Activated CD4-positive, alpha-beta T cell treated with anti-CD3 and anti-CD28 coated beads for 36 hours (primary cell): ENCODE measurements at regions of chr14 and their contacts with region 1.

Region 1: DNA sequence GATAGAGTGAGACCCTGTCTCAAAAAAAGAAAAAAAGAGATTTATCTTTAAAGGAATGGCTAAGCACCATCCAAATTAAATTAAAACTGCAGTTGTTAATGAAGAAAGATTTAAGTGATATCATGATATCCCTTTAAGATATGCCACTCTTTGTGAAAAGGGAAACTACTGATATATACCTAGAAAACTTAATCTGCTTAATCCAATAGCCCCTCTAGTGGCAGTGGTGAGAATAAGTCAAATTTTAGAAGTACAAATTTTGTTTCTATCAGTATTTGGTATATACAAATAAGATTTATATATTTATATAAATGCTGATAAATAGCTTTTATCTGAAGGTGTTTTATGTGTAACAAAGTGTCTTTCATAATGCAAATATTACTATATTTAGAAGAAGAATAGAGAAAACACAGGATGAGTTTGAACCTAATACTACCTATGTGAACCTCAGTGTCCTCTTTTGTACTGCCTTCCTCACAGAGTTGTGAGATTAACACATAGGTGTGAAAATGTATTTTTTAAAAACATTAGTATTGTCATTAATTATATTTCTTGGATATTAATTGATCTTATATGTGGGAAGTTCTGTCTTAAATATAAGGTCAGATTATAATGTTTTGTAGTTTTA is 51.4 kb upstream of the GARIN2 start:
- DNase-seq: no peak
- ATAC-seq: no peak
- H3K4me3 Mint-ChIP-seq: no peak overlapping the region
- H3K27ac Mint-ChIP-seq: no peak overlapping the region
- H3K4me1 Mint-ChIP-seq: peaks cover 28% of the 10 kb centered on the region
- H3K27me3 Mint-ChIP-seq: no peaks in the 10 kb centered on the region

Region 2: DNA sequence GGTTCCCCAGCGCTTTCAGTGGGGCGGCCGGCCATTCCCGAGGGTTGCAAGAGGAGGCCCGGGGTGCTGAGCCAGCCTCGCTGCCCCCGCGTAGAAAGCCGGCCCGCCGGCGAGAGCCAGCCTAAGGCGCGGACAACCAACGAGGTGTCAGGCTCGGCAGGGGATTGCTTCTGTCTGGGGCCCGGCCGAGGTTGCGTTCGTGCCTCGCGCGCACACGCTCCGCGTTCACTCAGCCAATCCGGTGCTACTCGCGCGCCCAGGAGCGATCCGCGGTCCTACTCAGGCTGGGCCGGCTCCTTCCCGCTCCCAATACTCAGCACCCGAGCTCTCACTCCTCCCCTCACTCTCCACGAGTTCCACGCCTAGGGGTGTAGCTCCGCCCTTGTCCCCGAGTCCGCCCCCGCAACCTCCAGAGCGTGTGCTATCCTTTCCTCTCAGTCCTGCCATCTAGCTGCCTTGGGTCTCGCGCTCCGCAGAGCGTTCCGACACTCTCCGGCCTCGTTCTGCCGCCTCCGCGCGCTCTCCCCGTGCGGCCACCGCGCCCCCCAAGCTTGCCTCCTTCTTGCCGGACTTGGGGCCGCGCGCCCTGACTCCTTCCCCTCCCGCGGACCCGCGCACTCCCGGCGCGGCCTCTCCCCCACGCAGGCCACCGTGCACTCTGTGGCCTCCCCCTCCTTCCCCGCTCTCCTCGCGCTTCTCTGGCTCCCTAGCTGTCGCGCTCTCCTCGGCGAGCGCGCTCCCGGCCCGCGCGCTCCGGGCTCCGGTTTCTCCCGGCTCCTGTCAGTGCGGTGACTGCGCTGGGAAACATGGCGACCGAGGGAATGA is 629.9 kb before region 1 on chr14 and contains the start of gene GPHN:
- CTCF ChIA-PET with region 1: no interaction called
- POLR2A ChIA-PET with region 1: no interaction called
- intact Hi-C with region 1: loop called in 1 of 2 experiments (anchors 1 kb)
- DNase-seq: peak; percentile 96
- ATAC-seq: peak; percentile 96
- H3K4me3 Mint-ChIP-seq: peak within 1 kb of the TSS; percentile 90
- H3K27ac Mint-ChIP-seq: peak within 1 kb of the TSS; percentile 94
- H3K4me1 Mint-ChIP-seq: peaks cover 39% of the 10 kb centered on the region
- H3K27me3 Mint-ChIP-seq: peaks cover 3% of the 10 kb centered on the region
- total RNA-seq, gene GPHN: 29.8 to 37.5 TPM

Region 3: DNA sequence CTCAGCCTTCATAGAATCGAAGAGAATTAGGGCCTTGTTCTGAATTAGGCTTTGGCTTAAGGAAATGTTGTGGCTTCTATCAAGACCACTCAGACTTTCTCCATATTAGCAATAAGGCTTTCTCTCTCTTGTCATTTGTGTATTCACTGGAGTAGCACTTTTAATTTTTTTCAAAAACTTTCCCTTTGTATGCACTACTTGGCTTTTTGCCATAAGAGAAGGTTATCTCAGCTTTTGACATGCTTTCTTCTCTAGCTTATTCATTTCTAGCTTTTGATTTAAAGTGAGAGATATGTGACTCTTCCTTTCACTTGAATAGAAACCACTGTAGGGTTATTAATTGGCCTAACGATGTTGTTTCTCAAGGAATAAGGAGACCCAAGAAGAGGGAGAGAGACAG is 385.7 kb before region 1 on chr14:
- CTCF ChIA-PET with region 1: no interaction called
- POLR2A ChIA-PET with region 1: no interaction called
- intact Hi-C with region 1: loop called in 1 of 2 experiments (anchors 1 kb)
- DNase-seq: no peak
- ATAC-seq: peak; percentile 83
- H3K4me3 Mint-ChIP-seq: no peak overlapping the region
- H3K27ac Mint-ChIP-seq: no peak overlapping the region
- H3K4me1 Mint-ChIP-seq: peaks cover 13% of the 10 kb centered on the region
- H3K27me3 Mint-ChIP-seq: no peaks in the 10 kb centered on the region

Region 4: DNA sequence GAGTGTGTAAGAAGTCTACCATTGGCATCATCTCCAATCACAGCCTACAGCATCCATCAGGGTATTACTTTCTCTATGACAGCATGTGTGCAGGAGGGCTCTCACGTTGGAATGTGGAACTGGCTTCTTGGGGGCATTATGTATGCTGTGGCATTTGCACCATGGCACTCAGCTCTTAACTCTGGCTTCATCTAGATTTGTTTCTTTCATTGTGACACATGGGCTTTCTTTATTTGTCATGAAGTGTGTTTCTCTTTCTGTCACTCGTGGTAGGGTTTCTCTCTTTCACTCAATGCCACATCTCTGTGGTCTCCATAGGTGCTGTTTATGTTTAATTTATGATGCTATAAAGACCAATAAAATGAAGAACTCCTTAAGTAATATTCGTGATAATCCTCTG is 139.8 kb before region 1 on chr14:
- CTCF ChIA-PET with region 1: interaction called, 5 read pairs
- POLR2A ChIA-PET with region 1: no interaction called
- intact Hi-C with region 1: loop called (anchors 1 to 10 kb)
- DNase-seq: peak; percentile 37
- ATAC-seq: peak; percentile 98
- H3K4me3 Mint-ChIP-seq: no peak overlapping the region
- H3K27ac Mint-ChIP-seq: no peak overlapping the region
- H3K4me1 Mint-ChIP-seq: peaks cover 11% of the 10 kb centered on the region
- H3K27me3 Mint-ChIP-seq: no peaks in the 10 kb centered on the region

Region 5: DNA sequence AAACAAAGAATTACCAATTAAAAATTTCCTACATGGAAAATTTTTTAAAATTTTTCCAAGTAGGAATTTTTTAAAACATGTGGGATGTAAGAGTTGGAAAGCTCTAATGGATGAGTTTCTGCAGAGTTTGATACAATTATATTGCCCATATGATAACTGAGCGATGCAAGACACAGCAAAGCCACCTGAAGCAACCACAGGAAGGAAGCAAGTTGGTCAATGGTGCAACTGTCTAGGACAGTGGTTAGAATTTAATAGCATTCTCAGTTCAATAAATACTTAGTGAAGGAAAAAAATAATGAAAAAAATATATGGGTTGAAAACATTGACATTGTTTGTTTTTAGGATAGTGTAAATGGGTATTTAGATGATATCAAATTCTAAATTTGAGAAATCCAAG is 127.3 kb before region 1 on chr14:
- CTCF ChIA-PET with region 1: no interaction called
- POLR2A ChIA-PET with region 1: no interaction called
- intact Hi-C with region 1: no loop called
- DNase-seq: no peak
- ATAC-seq: no peak
- H3K4me3 Mint-ChIP-seq: no peak overlapping the region
- H3K27ac Mint-ChIP-seq: no peak overlapping the region
- H3K4me1 Mint-ChIP-seq: no peaks in the 10 kb centered on the region
- H3K27me3 Mint-ChIP-seq: no peaks in the 10 kb centered on the region

Region 6: GRCh38 chr14:67167420-67168109 is 29.7 kb after region 1 on chr14:
- CTCF ChIA-PET with region 1: no interaction called
- POLR2A ChIA-PET with region 1: no interaction called
- intact Hi-C with region 1: no loop called
- DNase-seq: no peak
- ATAC-seq: no peak
- H3K4me3 Mint-ChIP-seq: no peak overlapping the region
- H3K27ac Mint-ChIP-seq: no peak overlapping the region
- H3K4me1 Mint-ChIP-seq: no peaks in the 10 kb centered on the region
- H3K27me3 Mint-ChIP-seq: no peaks in the 10 kb centered on the region

Region 7: DNA sequence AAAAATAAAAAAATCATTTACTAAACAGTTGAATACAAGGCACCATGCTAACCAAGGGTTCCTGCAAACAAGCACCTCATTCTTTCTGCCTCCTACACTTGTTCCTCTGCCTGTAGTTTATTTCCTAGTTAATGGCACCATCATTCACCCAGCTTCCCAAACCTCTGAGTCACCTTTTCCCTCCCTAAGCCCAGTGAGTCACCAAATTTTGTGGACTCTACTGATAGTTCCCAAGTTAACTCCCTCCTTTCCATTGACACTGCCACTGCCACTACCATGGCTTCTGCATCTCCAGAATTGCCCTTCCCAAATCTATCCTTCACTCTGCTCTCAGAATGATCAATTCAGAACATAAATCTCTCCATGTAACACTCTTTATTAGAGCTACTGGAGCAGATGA is 49.4 kb after region 1 on chr14:
- CTCF ChIA-PET with region 1: interaction called, 3 read pairs
- POLR2A ChIA-PET with region 1: interaction called, 6 read pairs
- intact Hi-C with region 1: loop called (anchors 1 to 2 kb)
- DNase-seq: no peak
- ATAC-seq: no peak
- H3K4me3 Mint-ChIP-seq: no peak overlapping the region
- H3K27ac Mint-ChIP-seq: no peak overlapping the region
- H3K4me1 Mint-ChIP-seq: peaks cover 20% of the 10 kb centered on the region
- H3K27me3 Mint-ChIP-seq: no peaks in the 10 kb centered on the region